ENCODE measurements at regions of chr3 and their contacts with region 1.

Region 1: GRCh38 chr3:143604402-143605185 is 243.7 kb downstream of the SLC9A9 start:
- DNase-seq: no peak
- H3K4me3 ChIP-seq: no peak overlapping the region
- H3K4me3 Mint-ChIP-seq: no peak overlapping the region
- H3K27ac Mint-ChIP-seq: no peak overlapping the region
- H3K4me1 ChIP-seq: no peaks in the 10 kb centered on the region
- H3K4me1 Mint-ChIP-seq: no peaks in the 10 kb centered on the region
- H3K27me3 ChIP-seq: no peaks in the 10 kb centered on the region
- H3K27me3 Mint-ChIP-seq: no peaks in the 10 kb centered on the region
- CTCF ChIP-seq: no peak

Region 2: GRCh38 chr3:143644370-143645089 is 39.9 kb after region 1 on chr3:
- CTCF ChIA-PET with region 1: no interaction called
- POLR2A ChIA-PET with region 1: no interaction called
- intact Hi-C with region 1: loop called (anchors 5 kb)
- DNase-seq: peak; percentile 44 to 51
- H3K4me3 ChIP-seq: no peak overlapping the region
- H3K4me3 Mint-ChIP-seq: no peak overlapping the region
- H3K27ac Mint-ChIP-seq: no peak overlapping the region
- H3K4me1 ChIP-seq: no peaks in the 10 kb centered on the region
- H3K4me1 Mint-ChIP-seq: peaks cover 6% of the 10 kb centered on the region
- H3K27me3 ChIP-seq: no peaks in the 10 kb centered on the region
- H3K27me3 Mint-ChIP-seq: peaks cover 3% of the 10 kb centered on the region
- CTCF ChIP-seq: peak; percentile 27 to 49